Naive thymus-derived CD4-positive, alpha-beta T cell (primary cell): ENCODE measurements at regions of chr1 and their contacts with region 1.

Region 1: DNA sequence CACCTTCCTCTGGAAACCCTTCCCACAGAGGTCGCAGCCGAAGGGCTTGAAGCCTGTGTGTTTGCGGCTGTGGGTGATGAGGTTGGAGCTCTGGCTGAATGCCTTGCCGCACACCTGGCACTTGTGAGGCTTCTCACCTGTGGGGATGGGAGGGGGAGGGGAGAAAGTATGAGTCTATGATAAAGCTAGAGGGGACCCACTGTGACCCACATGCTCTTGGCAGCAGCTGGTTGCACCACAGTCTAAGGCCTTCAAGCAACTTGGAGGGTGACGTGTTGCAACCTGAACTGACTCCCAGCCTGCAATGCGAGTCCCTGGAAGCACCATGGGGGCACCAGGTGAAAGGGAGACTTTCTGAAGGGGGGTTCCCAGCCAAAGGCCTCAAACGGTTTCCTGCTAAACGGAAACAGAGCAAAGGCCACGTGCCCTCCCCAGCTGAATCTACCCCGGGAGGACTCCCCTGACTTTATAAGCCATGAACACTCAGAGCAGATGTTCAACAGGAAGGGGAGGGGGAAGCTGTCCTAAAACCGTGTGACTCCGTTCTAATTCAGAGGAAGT is 10.6 kb downstream of the GFI1 start:
- DNase-seq: peak in 8 of 9 donors; percentile 45 to 82 (median 58)
- ATAC-seq: peak; percentile 85
- H3K4me3 ChIP-seq: no peak overlapping the region
- H3K4me3 Mint-ChIP-seq: peak overlapping the region; percentile 2 to 78 (median 72)
- H3K27ac ChIP-seq: peak overlapping the region; percentile 68
- H3K27ac Mint-ChIP-seq: peak overlapping the region; percentile 76 to 92 (median 86)
- H3K4me1 ChIP-seq: peaks cover 19 to 59% of the 10 kb centered on the region in 2 donors
- H3K4me1 Mint-ChIP-seq: peaks cover 24 to 86% (median 64%) of the 10 kb centered on the region in 7 donors
- H3K27me3 ChIP-seq: no peaks in the 10 kb centered on the region
- H3K27me3 Mint-ChIP-seq: no peaks in the 10 kb centered on the region

Region 2: DNA sequence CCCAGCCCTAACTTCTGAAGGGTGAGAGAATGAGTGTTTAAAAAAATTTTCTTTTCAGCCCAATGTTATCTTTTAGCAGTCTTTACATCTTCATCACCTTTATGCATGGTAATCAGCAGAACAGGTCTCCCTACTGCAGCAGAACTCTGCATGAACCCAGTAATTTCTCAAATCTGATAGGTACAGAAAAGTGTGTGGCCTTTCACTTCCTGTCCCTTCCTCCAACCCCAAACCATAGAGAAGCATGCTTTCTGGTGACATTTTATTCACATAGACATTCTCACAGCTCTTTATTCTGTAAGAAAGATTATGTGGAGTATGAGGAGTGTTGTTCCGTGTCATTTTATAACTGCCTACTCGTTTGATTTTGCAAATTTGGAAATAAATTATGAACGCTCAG is 108.7 kb before region 1 on chr1:
- CTCF ChIA-PET with region 1: no interaction called
- POLR2A ChIA-PET with region 1: no interaction called
- intact Hi-C with region 1: loop called in 1 of 2 experiments (anchors 5 kb)
- DNase-seq: peak in 2 of 9 donors; percentile 4 to 13
- ATAC-seq: peak; percentile 57
- H3K4me3 ChIP-seq: no peak overlapping the region
- H3K4me3 Mint-ChIP-seq: peak overlapping the region in 5 of 10 donors; percentile 2 to 18 (median 14)
- H3K27ac ChIP-seq: no peak overlapping the region
- H3K27ac Mint-ChIP-seq: peak overlapping the region in 5 of 9 donors; percentile 4 to 53 (median 9)
- H3K4me1 ChIP-seq: peaks cover 5 to 33% of the 10 kb centered on the region in 2 donors
- H3K4me1 Mint-ChIP-seq: peaks cover 18 to 57% (median 50%) of the 10 kb centered on the region in 7 donors
- H3K27me3 ChIP-seq: no peaks in the 10 kb centered on the region
- H3K27me3 Mint-ChIP-seq: no peaks in the 10 kb centered on the region

Region 3: DNA sequence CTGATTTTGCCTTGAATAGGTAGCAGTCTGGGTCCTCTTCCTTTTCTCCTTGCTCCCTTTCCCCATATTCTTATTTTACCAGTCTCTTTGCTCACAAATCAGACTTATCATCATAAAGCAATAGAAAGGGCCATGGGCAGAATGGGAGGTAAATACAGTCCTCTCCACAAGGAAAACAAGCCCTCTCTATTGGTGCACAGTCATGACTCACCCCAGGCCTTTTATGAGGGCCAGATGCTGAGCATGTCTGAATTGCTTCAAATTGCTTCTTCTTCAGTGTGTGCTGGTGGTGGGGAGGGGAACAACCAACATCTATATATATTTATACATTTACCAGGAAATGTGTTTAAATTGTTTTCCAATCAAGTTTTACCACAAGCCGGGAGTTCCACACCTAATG is 64.6 kb before region 1 on chr1:
- CTCF ChIA-PET with region 1: no interaction called
- POLR2A ChIA-PET with region 1: interaction called, 3 read pairs
- intact Hi-C with region 1: loop called in 1 of 2 experiments (anchors 1 kb)
- DNase-seq: no peak
- ATAC-seq: no peak
- H3K4me3 ChIP-seq: no peak overlapping the region
- H3K4me3 Mint-ChIP-seq: peak overlapping the region in 9 of 10 donors; percentile 15 to 73 (median 55)
- H3K27ac ChIP-seq: no peak overlapping the region
- H3K27ac Mint-ChIP-seq: peak overlapping the region in 5 of 9 donors; percentile 28 to 84 (median 72)
- H3K4me1 ChIP-seq: peaks cover 23 to 27% of the 10 kb centered on the region in 2 donors
- H3K4me1 Mint-ChIP-seq: peaks cover 23 to 47% (median 39%) of the 10 kb centered on the region in 7 donors
- H3K27me3 ChIP-seq: no peaks in the 10 kb centered on the region
- H3K27me3 Mint-ChIP-seq: no peaks in the 10 kb centered on the region

Region 4: GRCh38 chr1:92461364-92462097 is 14.6 kb before region 1 on chr1:
- CTCF ChIA-PET with region 1: no interaction called
- POLR2A ChIA-PET with region 1: interaction called, 8 read pairs
- intact Hi-C with region 1: loop called (anchors 1 to 2 kb)
- DNase-seq: no peak
- ATAC-seq: peak; percentile 18
- H3K4me3 ChIP-seq: no peak overlapping the region
- H3K4me3 Mint-ChIP-seq: peak overlapping the region in 3 of 10 donors; percentile 8 to 49 (median 32)
- H3K27ac ChIP-seq: no peak overlapping the region
- H3K27ac Mint-ChIP-seq: peak overlapping the region in 1 of 9 donors; percentile 68
- H3K4me1 ChIP-seq: peaks cover 23 to 27% of the 10 kb centered on the region in 2 donors
- H3K4me1 Mint-ChIP-seq: peaks cover 30 to 63% (median 57%) of the 10 kb centered on the region in 7 donors
- H3K27me3 ChIP-seq: no peaks in the 10 kb centered on the region
- H3K27me3 Mint-ChIP-seq: no peaks in the 10 kb centered on the region

Region 5: DNA sequence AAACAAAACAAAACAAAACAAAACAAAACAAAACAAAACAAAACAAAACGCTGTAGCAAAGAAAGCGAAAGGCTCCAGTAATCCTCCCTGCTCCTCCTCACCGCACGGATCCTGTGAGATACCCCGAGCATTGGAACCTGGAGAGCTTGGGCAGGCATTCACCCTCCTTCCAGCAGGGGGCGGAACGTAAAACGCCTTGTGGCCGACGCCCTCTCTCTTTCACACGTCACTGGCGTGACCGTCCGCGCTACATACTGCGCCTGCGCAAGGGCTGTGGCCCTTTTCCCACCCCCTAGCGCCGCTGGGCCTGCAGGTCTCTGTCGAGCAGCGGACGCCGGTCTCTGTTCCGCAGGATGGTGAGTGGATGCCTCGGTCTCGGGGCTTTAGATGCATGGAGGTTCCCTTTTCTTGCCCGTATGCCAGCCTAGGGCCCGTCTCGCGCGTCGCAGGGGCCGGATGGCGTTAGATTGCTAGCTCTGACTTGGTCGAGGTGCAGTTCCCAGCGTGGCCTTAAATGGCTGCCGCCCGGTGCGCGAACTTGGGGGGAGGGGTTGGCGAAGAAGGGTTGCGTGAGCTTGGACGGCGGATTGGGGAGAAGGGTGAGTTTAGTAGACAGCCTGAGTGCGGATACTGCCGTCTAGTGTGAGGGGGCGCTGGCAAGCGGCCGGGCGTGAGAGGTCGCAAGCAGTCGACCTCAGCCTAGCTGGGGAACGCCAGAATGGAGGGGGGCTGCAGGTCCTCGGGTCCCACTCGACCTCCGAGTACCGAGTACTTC is 355.8 kb after region 1 on chr1 and contains the start of gene RPL5:
- CTCF ChIA-PET with region 1: no interaction called
- POLR2A ChIA-PET with region 1: no interaction called
- intact Hi-C with region 1: loop called (anchors 5 to 10 kb)
- DNase-seq: peak; percentile 94 to 99 (median 98)
- ATAC-seq: peak; percentile 95
- H3K4me3 ChIP-seq: peak within 1 kb of the TSS; percentile 94
- H3K4me3 Mint-ChIP-seq: peak within 1 kb of the TSS; percentile 94 to 100 (median 98)
- H3K27ac ChIP-seq: peak within 1 kb of the TSS; percentile 94
- H3K27ac Mint-ChIP-seq: peak within 1 kb of the TSS; percentile 98 to 100 (median 99)
- H3K4me1 ChIP-seq: peaks cover 16 to 30% of the 10 kb centered on the region in 2 donors
- H3K4me1 Mint-ChIP-seq: peaks cover 29 to 54% (median 44%) of the 10 kb centered on the region in 7 donors
- H3K27me3 ChIP-seq: no peaks in the 10 kb centered on the region
- H3K27me3 Mint-ChIP-seq: peaks cover 0 to 5% (median 0%) of the 10 kb centered on the region in 5 donors
- total RNA-seq, gene RPL5: 764 to 1,693 (median 1,596) TPM